CD8-positive, alpha-beta T cell (primary cell): ENCODE measurements at regions of chr12 and their contacts with region 1.

Region 1: GRCh38 chr12:68223083-68223747 is 2.4 kb downstream of the IL26 start:
- DNase-seq: peak; percentile 43 to 90 (median 68)
- ATAC-seq: peak; percentile 92
- H3K4me3 ChIP-seq: no peak overlapping the region
- H3K4me3 Mint-ChIP-seq: peak overlapping the region; percentile 65
- H3K27ac ChIP-seq: no peak overlapping the region
- H3K27ac Mint-ChIP-seq: peak overlapping the region; percentile 45
- H3K4me1 ChIP-seq: peaks cover 7% of the 10 kb centered on the region
- H3K4me1 Mint-ChIP-seq: peaks cover 7% of the 10 kb centered on the region
- H3K27me3 ChIP-seq: no peaks in the 10 kb centered on the region
- H3K27me3 Mint-ChIP-seq: no peaks in the 10 kb centered on the region
- CTCF ChIP-seq: peak; percentile 83

Region 2: GRCh38 chr12:68040450-68041075 is 182.7 kb before region 1 on chr12:
- CTCF ChIA-PET with region 1: interaction called, 53 read pairs
- POLR2A ChIA-PET with region 1: interaction called, 3 read pairs
- intact Hi-C with region 1: loop called (anchors 1 to 2 kb)
- DNase-seq: peak; percentile 15 to 85 (median 65)
- ATAC-seq: peak; percentile 79
- H3K4me3 ChIP-seq: no peak overlapping the region
- H3K4me3 Mint-ChIP-seq: no peak overlapping the region
- H3K27ac ChIP-seq: no peak overlapping the region
- H3K27ac Mint-ChIP-seq: no peak overlapping the region
- H3K4me1 ChIP-seq: no peaks in the 10 kb centered on the region
- H3K4me1 Mint-ChIP-seq: peaks cover 25% of the 10 kb centered on the region
- H3K27me3 ChIP-seq: no peaks in the 10 kb centered on the region
- H3K27me3 Mint-ChIP-seq: no peaks in the 10 kb centered on the region
- CTCF ChIP-seq: peak; percentile 89

Region 3: GRCh38 chr12:68175557-68176061 is 47.6 kb before region 1 on chr12:
- CTCF ChIA-PET with region 1: interaction called, 15 read pairs
- POLR2A ChIA-PET with region 1: interaction called, 4 read pairs
- intact Hi-C with region 1: loop called in 1 of 2 experiments (anchors 5 kb)
- DNase-seq: peak; percentile 26 to 95 (median 60)
- ATAC-seq: peak; percentile 86
- H3K4me3 ChIP-seq: peak overlapping the region; percentile 19 to 33
- H3K4me3 Mint-ChIP-seq: peak overlapping the region; percentile 77
- H3K27ac ChIP-seq: peak overlapping the region; percentile 62 to 71
- H3K27ac Mint-ChIP-seq: peak overlapping the region; percentile 95
- H3K4me1 ChIP-seq: peaks cover 66% of the 10 kb centered on the region
- H3K4me1 Mint-ChIP-seq: peaks cover 67% of the 10 kb centered on the region
- H3K27me3 ChIP-seq: no peaks in the 10 kb centered on the region
- H3K27me3 Mint-ChIP-seq: no peaks in the 10 kb centered on the region
- CTCF ChIP-seq: no peak

Region 4: DNA sequence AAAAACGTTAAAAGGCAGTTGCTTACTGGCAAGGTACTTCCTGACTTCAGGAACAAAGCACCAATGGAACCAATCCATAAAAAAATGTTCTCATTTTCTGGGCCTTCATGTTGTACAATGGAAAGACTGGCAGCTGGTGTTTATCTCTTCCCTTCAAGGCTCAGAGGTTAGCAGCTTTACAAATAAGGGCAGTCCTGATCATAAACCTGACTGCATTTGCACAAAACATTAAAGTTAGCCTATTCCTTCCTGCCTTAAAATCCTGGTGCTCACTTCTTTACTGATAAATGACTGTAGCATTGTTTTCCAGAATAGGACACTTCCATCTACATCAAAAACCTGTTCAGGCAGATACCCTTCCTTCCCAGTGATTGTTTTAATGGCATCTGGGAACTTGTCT is 16.8 kb before region 1 on chr12:
- CTCF ChIA-PET with region 1: interaction called, 12 read pairs
- POLR2A ChIA-PET with region 1: no interaction called
- intact Hi-C with region 1: no loop called
- DNase-seq: no peak
- ATAC-seq: no peak
- H3K4me3 ChIP-seq: no peak overlapping the region
- H3K4me3 Mint-ChIP-seq: no peak overlapping the region
- H3K27ac ChIP-seq: no peak overlapping the region
- H3K27ac Mint-ChIP-seq: no peak overlapping the region
- H3K4me1 ChIP-seq: peaks cover 9% of the 10 kb centered on the region
- H3K4me1 Mint-ChIP-seq: peaks cover 22% of the 10 kb centered on the region
- H3K27me3 ChIP-seq: no peaks in the 10 kb centered on the region
- H3K27me3 Mint-ChIP-seq: no peaks in the 10 kb centered on the region
- CTCF ChIP-seq: no peak

Region 5: DNA sequence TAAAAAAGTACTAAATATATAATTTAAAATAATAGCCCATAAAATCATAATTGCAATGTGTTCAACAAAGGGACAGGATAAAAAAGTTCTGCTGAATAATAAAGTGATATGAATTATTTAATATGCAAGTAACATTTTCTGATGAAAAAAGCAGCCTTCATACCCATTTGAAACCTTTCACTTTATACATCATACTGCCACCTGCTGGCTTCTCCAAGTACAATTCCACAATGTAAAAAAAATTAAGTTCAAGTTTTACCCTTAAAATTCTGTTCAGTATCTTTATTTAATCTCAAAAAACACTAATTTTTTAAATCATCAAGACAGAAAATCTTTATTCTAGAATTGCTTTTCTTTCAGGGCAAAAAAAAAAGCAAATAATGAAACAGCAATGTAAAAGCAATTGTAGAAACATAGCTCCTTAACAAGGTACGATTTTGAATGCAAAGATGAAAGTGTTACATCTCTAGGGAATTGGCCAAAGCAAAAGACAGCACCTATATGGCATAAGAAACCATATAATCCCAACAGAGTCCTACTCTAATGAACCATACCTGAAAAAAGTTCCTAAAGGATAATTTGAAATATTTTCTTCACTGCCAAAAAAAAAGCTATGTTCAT is 93.9 kb after region 1 on chr12:
- CTCF ChIA-PET with region 1: interaction called, 90 read pairs
- POLR2A ChIA-PET with region 1: interaction called, 5 read pairs
- intact Hi-C with region 1: loop called (anchors 1 kb)
- DNase-seq: peak in 8 of 9 experiments; percentile 21 to 75 (median 48)
- ATAC-seq: peak; percentile 36
- H3K4me3 ChIP-seq: no peak overlapping the region
- H3K4me3 Mint-ChIP-seq: no peak overlapping the region
- H3K27ac ChIP-seq: no peak overlapping the region
- H3K27ac Mint-ChIP-seq: no peak overlapping the region
- H3K4me1 ChIP-seq: no peaks in the 10 kb centered on the region
- H3K4me1 Mint-ChIP-seq: no peaks in the 10 kb centered on the region
- H3K27me3 ChIP-seq: no peaks in the 10 kb centered on the region
- H3K27me3 Mint-ChIP-seq: no peaks in the 10 kb centered on the region
- CTCF ChIP-seq: peak; percentile 86

Region 6: GRCh38 chr12:69070319-69071090 is 847.3 kb after region 1 on chr12:
- CTCF ChIA-PET with region 1: no interaction called
- POLR2A ChIA-PET with region 1: no interaction called
- intact Hi-C with region 1: loop called in 1 of 2 experiments (anchors 1 kb)
- DNase-seq: peak; percentile 20 to 67 (median 47)
- ATAC-seq: peak; percentile 58
- H3K4me3 ChIP-seq: no peak overlapping the region
- H3K4me3 Mint-ChIP-seq: no peak overlapping the region
- H3K27ac ChIP-seq: no peak overlapping the region
- H3K27ac Mint-ChIP-seq: no peak overlapping the region
- H3K4me1 ChIP-seq: no peaks in the 10 kb centered on the region
- H3K4me1 Mint-ChIP-seq: no peaks in the 10 kb centered on the region
- H3K27me3 ChIP-seq: no peaks in the 10 kb centered on the region
- H3K27me3 Mint-ChIP-seq: peaks cover 13% of the 10 kb centered on the region
- CTCF ChIP-seq: peak; percentile 71